ENCODE measurements at regions of chr9 and their contacts with region 1.

Region 1: GRCh38 chr9:6008169-6008979 is 7.0 kb downstream of the RANBP6 start:
- DNase-seq: peak; percentile 97
- ATAC-seq: peak; percentile 72
- H3K4me3 ChIP-seq: peak overlapping the region; percentile 43 to 89 (median 73)
- H3K4me3 Mint-ChIP-seq: peak overlapping the region; percentile 95
- H3K27ac ChIP-seq: peak overlapping the region; percentile 86 to 91
- H3K27ac Mint-ChIP-seq: peak overlapping the region; percentile 89
- H3K4me1 ChIP-seq: peaks cover 17 to 21% of the 10 kb centered on the region in 2 donors
- H3K4me1 Mint-ChIP-seq: peaks cover 49% of the 10 kb centered on the region
- H3K27me3 ChIP-seq: no peaks in the 10 kb centered on the region
- H3K27me3 Mint-ChIP-seq: no peaks in the 10 kb centered on the region
- CTCF ChIP-seq: no peak

Region 2: GRCh38 chr9:4740638-4741364 is 1267.6 kb before region 1 on chr9 and contains the start of gene AK3:
- CTCF ChIA-PET with region 1: no interaction called
- POLR2A ChIA-PET with region 1: no interaction called
- intact Hi-C with region 1: loop called (anchors 5 kb)
- DNase-seq: peak; percentile 92
- ATAC-seq: peak; percentile 92
- H3K4me3 ChIP-seq: peak within 1 kb of the TSS; percentile 73 to 90 (median 85)
- H3K4me3 Mint-ChIP-seq: peak within 1 kb of the TSS; percentile 89
- H3K27ac ChIP-seq: peak within 1 kb of the TSS; percentile 51 to 83
- H3K27ac Mint-ChIP-seq: peak within 1 kb of the TSS; percentile 90
- H3K4me1 ChIP-seq: peaks cover 19 to 23% of the 10 kb centered on the region in 2 donors
- H3K4me1 Mint-ChIP-seq: peaks cover 27% of the 10 kb centered on the region
- H3K27me3 ChIP-seq: no peaks in the 10 kb centered on the region
- H3K27me3 Mint-ChIP-seq: no peaks in the 10 kb centered on the region
- CTCF ChIP-seq: no peak
- total RNA-seq, gene AK3: 20.4 and 22.9 TPM in 2 replicates

Region 3: DNA sequence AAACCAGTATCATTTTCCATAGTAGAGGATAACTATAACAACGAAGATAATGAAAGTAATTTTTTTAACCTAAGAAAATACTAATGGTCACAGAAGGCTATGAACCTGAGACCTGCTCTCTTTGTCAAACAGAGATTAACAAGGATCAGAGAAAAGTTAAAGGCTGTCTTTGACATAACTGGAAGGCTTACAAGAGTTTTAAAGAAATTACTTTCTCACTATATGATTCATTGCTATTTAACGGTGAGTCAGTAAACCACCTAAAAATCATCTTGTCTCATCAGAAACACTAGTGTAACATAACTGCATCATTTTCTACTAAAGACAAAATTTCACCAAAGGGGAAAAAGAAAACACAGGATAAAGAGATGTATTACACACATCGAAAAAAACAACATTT is 98.4 kb before region 1 on chr9:
- CTCF ChIA-PET with region 1: no interaction called
- POLR2A ChIA-PET with region 1: no interaction called
- intact Hi-C with region 1: no loop called
- DNase-seq: no peak
- ATAC-seq: no peak
- H3K4me3 ChIP-seq: no peak overlapping the region
- H3K4me3 Mint-ChIP-seq: no peak overlapping the region
- H3K27ac ChIP-seq: no peak overlapping the region
- H3K27ac Mint-ChIP-seq: no peak overlapping the region
- H3K4me1 ChIP-seq: no peaks in the 10 kb centered on the region
- H3K4me1 Mint-ChIP-seq: no peaks in the 10 kb centered on the region
- H3K27me3 ChIP-seq: no peaks in the 10 kb centered on the region
- H3K27me3 Mint-ChIP-seq: no peaks in the 10 kb centered on the region
- CTCF ChIP-seq: no peak

Region 4: DNA sequence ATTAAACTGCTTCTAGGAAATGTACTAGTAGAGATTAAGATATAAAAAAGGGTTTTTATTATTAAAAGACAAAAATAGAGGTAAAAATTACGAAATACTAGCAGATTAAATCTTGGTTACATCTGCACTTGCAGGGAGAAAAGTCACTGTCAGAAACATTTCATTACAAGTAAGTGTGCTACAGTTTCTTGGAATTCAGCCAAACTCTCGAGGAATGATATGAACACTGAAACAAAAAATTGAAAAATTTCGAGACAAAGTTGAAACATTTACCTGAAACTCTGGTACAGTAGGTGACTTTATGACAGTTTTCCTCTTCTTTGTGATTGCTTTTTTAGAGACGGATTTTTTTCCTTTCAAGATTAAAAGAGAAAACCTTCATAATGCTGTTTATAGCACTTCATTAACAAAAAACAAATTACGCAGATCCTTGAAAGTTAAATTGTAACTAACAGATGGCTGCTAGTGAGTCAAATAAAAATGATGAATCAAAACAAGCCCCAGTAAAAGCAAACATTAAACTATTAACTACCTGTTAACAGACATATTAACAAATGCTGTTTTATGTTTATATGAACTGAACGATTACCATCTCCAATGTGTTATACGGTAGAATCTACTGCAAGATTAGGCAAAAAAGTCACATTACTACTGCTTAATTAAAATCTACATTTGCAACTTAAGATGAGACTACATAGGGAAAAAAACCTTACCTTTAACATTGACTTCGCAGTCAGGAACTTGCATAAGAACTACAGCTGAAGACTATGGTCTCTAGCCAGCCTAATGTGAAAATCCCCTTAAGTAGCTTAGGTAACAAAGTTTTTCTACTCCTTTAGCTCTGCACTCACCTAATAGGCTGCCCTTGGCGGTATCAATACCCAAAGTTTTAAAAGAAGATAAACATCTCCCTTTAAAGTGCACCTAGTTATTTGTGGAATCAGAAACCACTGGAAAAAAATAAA is 54.3 kb before region 1 on chr9:
- CTCF ChIA-PET with region 1: no interaction called
- POLR2A ChIA-PET with region 1: no interaction called
- intact Hi-C with region 1: loop called (anchors 10 kb)
- DNase-seq: no peak
- ATAC-seq: no peak
- H3K4me3 ChIP-seq: no peak overlapping the region
- H3K4me3 Mint-ChIP-seq: no peak overlapping the region
- H3K27ac ChIP-seq: no peak overlapping the region
- H3K27ac Mint-ChIP-seq: no peak overlapping the region
- H3K4me1 ChIP-seq: peaks cover 5 to 16% of the 10 kb centered on the region in 2 donors
- H3K4me1 Mint-ChIP-seq: peaks cover 21% of the 10 kb centered on the region
- H3K27me3 ChIP-seq: no peaks in the 10 kb centered on the region
- H3K27me3 Mint-ChIP-seq: no peaks in the 10 kb centered on the region
- CTCF ChIP-seq: no peak

Region 5: GRCh38 chr9:6080154-6080716 is 71.9 kb after region 1 on chr9:
- CTCF ChIA-PET with region 1: no interaction called
- POLR2A ChIA-PET with region 1: no interaction called
- intact Hi-C with region 1: loop called (anchors 2 kb)
- DNase-seq: peak; percentile 89
- ATAC-seq: peak; percentile 94
- H3K4me3 ChIP-seq: peak overlapping the region in 4 of 5 experiments; percentile 47 to 67 (median 56)
- H3K4me3 Mint-ChIP-seq: peak overlapping the region; percentile 87
- H3K27ac ChIP-seq: peak overlapping the region; percentile 51 to 67
- H3K27ac Mint-ChIP-seq: peak overlapping the region; percentile 83
- H3K4me1 ChIP-seq: peaks cover 5 to 16% of the 10 kb centered on the region in 2 donors
- H3K4me1 Mint-ChIP-seq: peaks cover 6% of the 10 kb centered on the region
- H3K27me3 ChIP-seq: peaks cover 0 to 2% (median 0%) of the 10 kb centered on the region in 4 experiments
- H3K27me3 Mint-ChIP-seq: peaks cover 4% of the 10 kb centered on the region
- CTCF ChIP-seq: no peak

Region 6: DNA sequence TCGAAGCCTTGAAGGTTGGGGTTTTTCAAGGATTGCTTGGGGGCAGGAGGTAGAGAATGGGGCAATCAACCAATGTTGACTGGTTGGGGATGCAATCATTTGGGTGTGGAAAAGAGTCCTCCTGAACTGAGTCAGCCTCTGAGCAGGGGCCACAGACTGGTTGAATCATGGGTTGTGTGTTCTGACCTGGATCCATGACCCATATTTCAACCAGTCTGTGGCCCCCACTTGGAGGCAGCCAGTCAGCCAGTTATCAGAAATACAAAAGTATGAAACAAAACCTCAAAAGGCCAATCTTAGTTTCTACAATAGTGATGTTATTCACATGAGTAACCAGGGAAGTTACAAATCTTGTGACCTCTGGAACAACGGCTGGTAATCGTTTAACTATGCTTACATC is 88.4 kb after region 1 on chr9:
- CTCF ChIA-PET with region 1: no interaction called
- POLR2A ChIA-PET with region 1: no interaction called
- intact Hi-C with region 1: no loop called
- DNase-seq: no peak
- ATAC-seq: no peak
- H3K4me3 ChIP-seq: no peak overlapping the region
- H3K4me3 Mint-ChIP-seq: no peak overlapping the region
- H3K27ac ChIP-seq: no peak overlapping the region
- H3K27ac Mint-ChIP-seq: no peak overlapping the region
- H3K4me1 ChIP-seq: no peaks in the 10 kb centered on the region
- H3K4me1 Mint-ChIP-seq: no peaks in the 10 kb centered on the region
- H3K27me3 ChIP-seq: peaks cover 0 to 6% (median 0%) of the 10 kb centered on the region in 4 experiments
- H3K27me3 Mint-ChIP-seq: peaks cover 43% of the 10 kb centered on the region
- CTCF ChIP-seq: no peak

Measured in B cell (primary cell).